ENCODE measurements at regions of chr17 and their contacts with region 1.

Region 1: DNA sequence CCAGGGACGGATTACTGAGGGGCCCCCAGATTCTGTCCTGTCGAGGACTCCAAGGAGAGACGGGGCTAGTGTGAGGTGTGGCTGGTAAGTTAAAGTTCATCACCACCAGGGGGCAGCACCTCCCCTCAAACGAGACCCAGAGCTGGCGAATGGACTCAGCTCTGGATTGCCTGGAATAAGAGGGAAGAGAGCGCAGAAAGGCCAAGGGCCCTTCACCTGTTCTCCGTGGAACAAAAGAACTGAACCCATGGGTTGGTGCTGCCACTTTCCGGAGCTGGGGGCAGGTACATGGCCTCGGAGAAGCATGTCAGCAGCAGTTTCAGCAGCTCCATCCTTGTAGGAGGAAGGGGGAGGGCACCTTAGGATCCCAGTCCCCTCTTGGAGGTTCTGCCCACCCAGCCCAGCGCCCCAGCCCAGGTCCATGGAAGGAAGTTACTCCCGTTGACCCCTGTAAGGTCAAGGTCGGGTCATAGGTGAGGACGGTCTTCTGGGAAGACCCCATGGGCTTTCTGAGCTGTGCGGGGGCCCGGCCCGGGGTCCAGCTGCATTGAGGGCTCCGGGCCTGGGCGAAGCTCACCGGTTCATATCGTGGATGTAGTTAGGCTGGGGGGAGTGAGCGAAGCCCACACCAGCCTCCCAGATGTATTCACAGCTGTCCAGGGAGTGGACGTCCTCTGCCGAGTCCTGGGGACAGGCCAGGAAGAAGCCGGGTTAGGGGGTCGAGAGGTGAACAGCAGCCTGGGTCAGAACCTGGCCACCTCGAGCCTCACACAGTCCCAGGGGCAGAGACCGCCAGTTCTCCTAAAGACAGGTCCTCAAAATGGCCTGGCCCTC is 10.7 kb downstream of the HID1 start:
- DNase-seq: peak; percentile 71
- H3K4me3 ChIP-seq: no peak overlapping the region
- H3K27ac ChIP-seq: no peak overlapping the region
- H3K4me1 ChIP-seq: peaks cover 18% of the 10 kb centered on the region
- H3K27me3 ChIP-seq: no peaks in the 10 kb centered on the region
- CTCF ChIP-seq: peak; percentile 63 to 74

Region 2: GRCh38 chr17:74748529-74749365 is 213.1 kb before region 1 on chr17 and contains the start of gene NHERF1:
- CTCF ChIA-PET with region 1: no interaction called
- dilution Hi-C with region 1: no loop called
- in situ Hi-C with region 1: no loop called
- intact Hi-C with region 1: loop called (anchors 1 kb)
- DNase-seq: peak; percentile 93
- H3K4me3 ChIP-seq: peak within 1 kb of the TSS; percentile 66 to 82 (median 77)
- H3K27ac ChIP-seq: peak within 1 kb of the TSS; percentile 6
- H3K4me1 ChIP-seq: peaks cover 10% of the 10 kb centered on the region
- H3K27me3 ChIP-seq: no peaks in the 10 kb centered on the region
- CTCF ChIP-seq: no peak
- total RNA-seq, gene NHERF1: 5.8 to 24.6 TPM

Region 3: DNA sequence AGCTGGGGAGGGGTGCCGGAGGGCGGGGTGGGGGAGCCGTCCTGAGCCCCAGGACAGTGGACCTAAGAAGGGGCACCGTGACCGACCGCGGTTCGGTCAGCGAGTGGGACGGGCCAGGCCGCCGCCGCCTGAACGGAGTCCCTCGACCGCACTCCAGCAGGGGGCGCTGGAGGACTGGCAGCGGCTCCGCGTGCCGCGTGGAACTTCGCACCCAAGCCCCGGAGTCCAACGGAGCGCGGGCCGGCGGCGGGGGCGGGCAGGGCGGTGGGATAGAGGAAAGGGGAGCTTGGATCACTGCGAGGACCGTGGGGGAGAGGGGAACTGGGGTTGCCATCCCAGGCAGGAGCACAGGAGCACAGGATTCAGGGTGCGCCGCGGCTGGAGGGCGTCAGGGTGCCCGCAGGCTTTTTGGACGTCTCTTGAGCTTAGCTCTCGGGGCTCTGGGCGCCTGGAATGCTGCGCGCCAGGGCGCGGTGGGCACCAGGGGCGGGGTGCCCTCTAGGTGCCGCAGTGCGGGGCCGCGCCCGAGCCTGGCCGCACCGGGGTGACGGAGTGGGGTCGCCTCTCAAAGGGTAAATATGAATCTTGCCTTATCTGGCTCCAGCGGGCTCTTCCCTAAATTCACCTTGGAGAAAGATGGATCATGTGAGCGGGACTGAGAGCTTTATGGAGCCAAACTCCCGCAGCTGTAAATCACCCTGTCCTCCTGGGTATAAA is 38.2 kb before region 1 on chr17:
- CTCF ChIA-PET with region 1: interaction called, 18 read pairs
- dilution Hi-C with region 1: no loop called
- in situ Hi-C with region 1: loop called (anchors 5 kb)
- intact Hi-C with region 1: loop called (anchors 1 kb)
- DNase-seq: peak; percentile 33
- H3K4me3 ChIP-seq: peak overlapping the region; percentile 35 to 57 (median 40)
- H3K27ac ChIP-seq: no peak overlapping the region
- H3K4me1 ChIP-seq: peaks cover 26% of the 10 kb centered on the region
- H3K27me3 ChIP-seq: peaks cover 22% of the 10 kb centered on the region
- CTCF ChIP-seq: peak; percentile 55 to 90

Region 4: GRCh38 chr17:75006653-75007052 is 44.8 kb after region 1 on chr17:
- CTCF ChIA-PET with region 1: no interaction called
- dilution Hi-C with region 1: no loop called
- in situ Hi-C with region 1: no loop called
- intact Hi-C with region 1: loop called (anchors 1 kb)
- DNase-seq: no peak
- H3K4me3 ChIP-seq: no peak overlapping the region
- H3K27ac ChIP-seq: no peak overlapping the region
- H3K4me1 ChIP-seq: peaks cover 6% of the 10 kb centered on the region
- H3K27me3 ChIP-seq: no peaks in the 10 kb centered on the region
- CTCF ChIP-seq: no peak

Region 5: GRCh38 chr17:75046582-75047289 is 84.9 kb after region 1 on chr17 and contains the starts of genes ATP5PD and KCTD2:
- CTCF ChIA-PET with region 1: no interaction called
- dilution Hi-C with region 1: no loop called
- in situ Hi-C with region 1: no loop called
- intact Hi-C with region 1: loop called (anchors 1 kb)
- DNase-seq: peak; percentile 96
- H3K4me3 ChIP-seq: peak within 1 kb of the TSS; percentile 98 to 100 (median 100)
- H3K27ac ChIP-seq: peak within 1 kb of the TSS; percentile 88
- H3K4me1 ChIP-seq: peaks cover 9% of the 10 kb centered on the region
- H3K27me3 ChIP-seq: no peaks in the 10 kb centered on the region
- CTCF ChIP-seq: no peak
- total RNA-seq, gene ATP5PD: 142 to 269 TPM
- total RNA-seq, gene KCTD2: 13.7 to 20.5 TPM

Region 6: DNA sequence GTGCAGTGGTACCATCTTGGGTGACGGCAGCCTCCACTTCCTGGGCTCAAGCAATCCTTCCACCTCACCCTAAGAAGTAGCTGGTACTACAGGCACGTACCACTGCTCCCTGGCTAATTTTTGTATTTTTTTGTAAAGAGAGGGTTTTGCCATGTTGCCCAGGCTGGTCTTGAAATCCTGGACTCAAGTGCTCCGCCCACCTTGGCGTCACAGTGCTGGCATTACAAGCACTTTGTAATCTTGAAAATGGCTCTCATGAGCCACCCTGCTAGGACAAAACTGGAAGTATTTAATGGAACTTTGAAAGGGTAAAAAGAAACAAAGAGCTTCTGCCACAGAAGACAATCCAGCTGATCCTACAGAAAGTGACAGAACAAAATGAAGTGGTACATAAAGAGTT is 211.7 kb after region 1 on chr17:
- CTCF ChIA-PET with region 1: no interaction called
- dilution Hi-C with region 1: no loop called
- in situ Hi-C with region 1: no loop called
- intact Hi-C with region 1: loop called (anchors 1 kb)
- DNase-seq: no peak
- H3K4me3 ChIP-seq: no peak overlapping the region
- H3K27ac ChIP-seq: no peak overlapping the region
- H3K4me1 ChIP-seq: no peaks in the 10 kb centered on the region
- H3K27me3 ChIP-seq: no peaks in the 10 kb centered on the region
- CTCF ChIP-seq: no peak

Measured in mammary epithelial cell (primary cell).